GM10248 (cell line): ENCODE measurements at regions of chr1 and their contacts with region 1.

Region 1: DNA sequence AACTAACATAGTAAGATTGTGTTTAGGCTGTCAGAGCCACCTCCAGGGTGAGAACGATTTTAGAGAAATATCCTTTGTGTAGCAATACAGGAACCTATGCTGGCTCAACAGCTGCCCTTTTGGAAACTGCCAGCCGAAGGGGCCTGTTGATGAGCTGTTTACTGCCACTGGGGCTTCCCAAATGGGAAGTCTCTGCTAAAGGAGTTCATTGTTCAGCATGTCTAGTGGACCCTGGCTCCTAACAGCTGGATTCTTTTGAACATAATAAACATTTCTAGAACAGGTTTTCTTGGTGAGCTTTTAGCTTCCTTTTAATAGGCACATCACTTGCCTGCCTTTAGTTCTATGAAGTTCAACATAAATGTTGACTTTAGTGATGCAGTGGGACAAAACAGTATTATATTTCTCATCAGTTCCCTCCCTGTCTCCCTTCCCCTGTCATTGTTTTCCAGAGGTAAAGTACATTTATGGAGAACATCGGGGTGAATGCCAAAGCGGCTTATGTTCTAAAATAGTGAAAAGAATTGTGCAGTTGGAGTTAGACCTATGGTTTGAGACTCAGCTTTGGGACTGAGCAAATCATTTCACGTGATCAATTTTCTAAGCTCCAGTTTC is 57.4 kb downstream of the UCK2 start:
- DNase-seq: no peak
- CTCF ChIP-seq: no peak

Region 2: DNA sequence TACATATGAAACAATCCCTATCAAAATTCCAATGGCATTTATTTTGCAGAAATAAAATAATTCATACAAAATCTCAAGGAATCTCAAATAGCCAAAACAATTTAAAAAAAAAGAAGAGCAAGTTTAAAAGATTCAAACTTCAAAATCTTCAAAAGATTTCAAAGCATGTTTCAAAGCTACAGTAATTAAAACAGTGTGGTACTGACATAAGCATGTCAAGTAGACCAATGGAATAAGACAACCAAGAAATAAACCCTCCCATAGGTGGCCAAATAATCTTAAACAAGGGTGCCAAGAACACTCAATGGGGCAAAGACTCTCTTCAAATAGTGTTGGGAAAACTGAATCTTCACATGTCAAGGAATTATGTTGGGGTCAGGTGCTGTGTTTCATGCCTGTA is 85.4 kb before region 1 on chr1:
- CTCF ChIA-PET with region 1: no interaction called
- POLR2A ChIA-PET with region 1: no interaction called
- DNase-seq: no peak
- CTCF ChIP-seq: no peak

Region 3: DNA sequence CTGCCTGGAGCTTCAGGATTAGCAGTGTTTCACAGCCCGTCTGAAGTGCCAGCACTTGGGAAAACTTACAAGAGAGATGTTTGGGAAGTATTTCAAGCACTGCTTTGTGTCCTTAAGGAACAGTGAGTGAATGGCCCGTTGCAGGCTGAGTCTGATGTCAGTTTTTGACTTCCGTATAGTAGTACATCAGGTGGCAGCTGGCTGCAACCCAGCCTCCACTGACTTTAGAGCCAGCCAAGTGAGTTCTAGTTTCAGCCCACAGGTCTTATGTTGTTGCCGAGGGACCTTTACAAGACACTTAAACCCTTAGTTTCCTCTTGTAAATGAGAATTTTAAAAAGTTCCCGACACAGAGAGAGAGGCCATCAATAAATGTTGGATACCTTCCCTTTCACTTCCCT is 22.3 kb before region 1 on chr1:
- CTCF ChIA-PET with region 1: interaction called, 11 read pairs
- POLR2A ChIA-PET with region 1: no interaction called
- DNase-seq: no peak
- CTCF ChIP-seq: no peak